ENCODE measurements at regions of chr16 and their contacts with region 1.

Region 1: GRCh38 chr16:14249291-14250032 is 178.3 kb downstream of the MRTFB start:
- DNase-seq: peak; percentile 58
- H3K4me3 ChIP-seq: no peak overlapping the region
- H3K27ac ChIP-seq: no peak overlapping the region
- H3K4me1 ChIP-seq: no peaks in the 10 kb centered on the region
- H3K27me3 ChIP-seq: no peaks in the 10 kb centered on the region
- CTCF ChIP-seq: peak; percentile 93

Region 2: GRCh38 chr16:13919683-13920509 is 329.6 kb before region 1 on chr16 and contains the start of gene ERCC4:
- CTCF ChIA-PET with region 1: interaction called, 3 read pairs
- POLR2A ChIA-PET with region 1: no interaction called
- intact Hi-C with region 1: loop called (anchors 10 kb)
- DNase-seq: peak; percentile 99
- H3K4me3 ChIP-seq: peak within 1 kb of the TSS; percentile 95
- H3K27ac ChIP-seq: peak within 1 kb of the TSS; percentile 87
- H3K4me1 ChIP-seq: peaks cover 7% of the 10 kb centered on the region
- H3K27me3 ChIP-seq: no peaks in the 10 kb centered on the region
- CTCF ChIP-seq: peak; percentile 95
- total RNA-seq, gene ERCC4: 18.5 and 18.8 TPM in 2 replicates

Region 3: GRCh38 chr16:14121142-14121541 is 128.3 kb before region 1 on chr16:
- CTCF ChIA-PET with region 1: no interaction called
- POLR2A ChIA-PET with region 1: no interaction called
- intact Hi-C with region 1: no loop called
- DNase-seq: no peak
- H3K4me3 ChIP-seq: no peak overlapping the region
- H3K27ac ChIP-seq: no peak overlapping the region
- H3K4me1 ChIP-seq: peaks cover 7% of the 10 kb centered on the region
- H3K27me3 ChIP-seq: no peaks in the 10 kb centered on the region
- CTCF ChIP-seq: no peak

Region 4: DNA sequence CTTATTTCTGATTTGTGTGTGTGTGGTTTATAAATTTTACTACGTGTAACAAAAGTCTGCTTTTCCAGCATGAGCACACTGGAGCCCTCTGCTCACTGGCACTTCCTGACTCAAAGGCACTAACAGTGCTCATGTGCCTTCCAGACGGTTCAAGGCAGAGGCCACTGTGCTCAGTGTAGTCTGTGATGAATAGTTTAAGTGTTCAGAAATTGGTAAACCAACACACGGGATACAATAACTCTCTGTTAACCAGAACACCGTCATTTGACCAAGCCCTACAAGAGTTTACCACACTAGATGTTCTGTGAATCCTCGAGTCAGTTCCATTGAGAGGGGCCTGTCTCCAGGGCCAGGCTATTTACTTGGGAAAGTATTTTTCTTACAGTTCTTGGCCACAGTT is 13.5 kb after region 1 on chr16:
- CTCF ChIA-PET with region 1: no interaction called
- POLR2A ChIA-PET with region 1: no interaction called
- intact Hi-C with region 1: no loop called
- DNase-seq: no peak
- H3K4me3 ChIP-seq: no peak overlapping the region
- H3K27ac ChIP-seq: no peak overlapping the region
- H3K4me1 ChIP-seq: no peaks in the 10 kb centered on the region
- H3K27me3 ChIP-seq: no peaks in the 10 kb centered on the region
- CTCF ChIP-seq: no peak

Region 5: GRCh38 chr16:14285513-14286385 is 36.3 kb after region 1 on chr16:
- CTCF ChIA-PET with region 1: interaction called, 3 read pairs
- POLR2A ChIA-PET with region 1: no interaction called
- intact Hi-C with region 1: loop called (anchors 5 kb)
- DNase-seq: peak; percentile 97
- H3K4me3 ChIP-seq: peak overlapping the region; percentile 79
- H3K27ac ChIP-seq: peak overlapping the region; percentile 67
- H3K4me1 ChIP-seq: peaks cover 1% of the 10 kb centered on the region
- H3K27me3 ChIP-seq: no peaks in the 10 kb centered on the region
- CTCF ChIP-seq: no peak

Region 6: DNA sequence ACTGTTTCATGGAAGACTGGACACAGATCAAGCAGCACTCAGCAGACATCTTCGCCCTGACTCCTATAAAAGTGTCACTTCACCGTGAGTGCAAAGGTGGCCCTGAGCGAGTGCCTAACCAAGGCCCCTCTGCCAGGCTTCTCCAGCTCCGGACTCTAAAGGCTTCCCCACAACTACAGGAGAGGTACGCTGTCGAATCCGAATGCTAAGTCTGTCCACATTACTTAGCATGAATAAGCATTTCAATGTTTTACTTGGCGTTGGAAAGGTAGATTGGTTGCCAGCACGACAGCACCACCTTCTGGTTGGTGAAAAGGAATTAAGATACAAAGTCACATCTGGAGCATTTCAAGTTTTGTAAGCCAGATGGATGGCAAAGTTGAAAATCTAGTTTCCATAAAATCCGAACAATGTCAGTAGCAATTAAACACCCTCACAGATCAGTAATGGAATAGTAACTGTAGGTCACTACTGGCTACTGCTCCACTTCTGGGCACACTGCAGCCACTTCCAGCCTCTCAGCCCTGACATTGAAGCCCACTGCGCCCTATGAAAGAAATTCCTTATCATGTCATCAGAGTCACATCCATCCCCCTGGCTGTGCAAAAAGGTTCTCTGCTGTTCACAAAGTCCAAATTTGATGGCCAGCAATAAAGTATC is 279.7 kb after region 1 on chr16:
- CTCF ChIA-PET with region 1: interaction called, 7 read pairs
- POLR2A ChIA-PET with region 1: interaction called, 4 read pairs
- intact Hi-C with region 1: loop called (anchors 1 kb)
- DNase-seq: peak; percentile 87
- H3K4me3 ChIP-seq: no peak overlapping the region
- H3K27ac ChIP-seq: peak overlapping the region; percentile 11
- H3K4me1 ChIP-seq: peaks cover 18% of the 10 kb centered on the region
- H3K27me3 ChIP-seq: no peaks in the 10 kb centered on the region
- CTCF ChIP-seq: peak; percentile 78

Region 7: GRCh38 chr16:14600164-14600563 is 350.7 kb after region 1 on chr16:
- CTCF ChIA-PET with region 1: no interaction called
- POLR2A ChIA-PET with region 1: no interaction called
- intact Hi-C with region 1: loop called (anchors 5 kb)
- DNase-seq: peak; percentile 30
- H3K4me3 ChIP-seq: no peak overlapping the region
- H3K27ac ChIP-seq: no peak overlapping the region
- H3K4me1 ChIP-seq: no peaks in the 10 kb centered on the region
- H3K27me3 ChIP-seq: no peaks in the 10 kb centered on the region
- CTCF ChIP-seq: peak; percentile 61

Measured in A673 (cell line).